ENCODE measurements at regions of chr12 and their contacts with region 1.

Region 1: DNA sequence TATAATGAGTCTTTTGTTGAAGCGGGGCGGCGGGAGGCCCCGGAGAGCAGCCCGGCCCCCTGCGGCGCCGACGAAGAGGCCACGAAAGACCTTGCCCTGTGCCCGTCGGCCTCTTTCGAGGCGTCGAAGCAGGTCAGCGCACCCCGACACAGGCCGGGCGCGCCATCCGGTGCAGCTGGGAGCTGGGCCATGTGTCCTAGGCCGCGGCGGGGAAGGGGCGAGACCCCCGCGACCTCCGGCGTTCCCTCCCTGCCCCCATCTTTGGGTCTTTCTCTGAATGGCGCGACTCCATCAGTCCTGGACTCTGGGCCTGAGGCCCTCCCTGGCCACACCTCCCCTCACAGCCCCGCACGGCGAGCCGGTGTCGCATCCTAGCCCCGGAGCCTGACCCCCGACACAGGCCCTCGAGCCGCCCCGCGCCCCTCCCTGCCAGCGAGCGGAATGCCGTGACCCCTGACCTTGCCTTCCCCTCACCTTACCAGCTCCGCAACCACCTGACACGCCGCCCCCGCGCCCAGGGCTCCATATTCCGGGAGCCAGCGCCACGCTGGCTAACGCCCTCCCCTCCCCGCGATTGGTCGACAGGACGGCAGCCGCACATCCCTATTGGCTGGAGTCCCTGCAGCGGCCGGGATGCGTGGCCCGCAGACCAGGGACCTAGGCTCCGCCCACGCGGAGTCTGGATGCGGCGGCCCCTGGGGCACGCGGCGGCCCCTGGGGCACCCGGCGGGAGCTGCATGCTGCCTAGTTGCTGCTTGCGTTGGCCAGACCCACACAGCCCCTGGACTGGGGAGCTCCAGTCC is at the start of gene SLC11A2:
- DNase-seq: peak; percentile 94
- ATAC-seq: peak; percentile 91
- H3K4me3 ChIP-seq: peak within 1 kb of the TSS; percentile 59 to 79 (median 79)
- H3K27ac ChIP-seq: peak within 1 kb of the TSS; percentile 99
- H3K4me1 ChIP-seq: peaks cover 73% of the 10 kb centered on the region
- H3K27me3 ChIP-seq: no peaks in the 10 kb centered on the region; a peak in 1 of 5 replicates
- CTCF ChIP-seq: peak; percentile 8
- EP300 ChIP-seq: peak in 1 of 2 experiments; percentile 77; a peak in 1 of 4 replicates
- POLR2A ChIP-seq: peak; percentile 73 to 83
- RAD21 ChIP-seq: peak; percentile 42
- total RNA-seq, gene SLC11A2: 46.0 and 71.7 TPM in 2 replicates

Region 2: GRCh38 chr12:50763639-50764285 is 262.3 kb before region 1 on chr12 and contains the start of gene ATF1:
- CTCF ChIA-PET with region 1: no interaction called
- POLR2A ChIA-PET with region 1: interaction called, 30 read pairs
- in situ Hi-C with region 1: no loop called
- intact Hi-C with region 1: loop called (anchors 2 kb)
- DNase-seq: peak; percentile 84
- ATAC-seq: peak; percentile 86
- H3K4me3 ChIP-seq: peak within 1 kb of the TSS; percentile 83 to 95 (median 90)
- H3K27ac ChIP-seq: peak within 1 kb of the TSS; percentile 98
- H3K4me1 ChIP-seq: peaks cover 47% of the 10 kb centered on the region
- H3K27me3 ChIP-seq: no peaks in the 10 kb centered on the region; a peak in 1 of 5 replicates
- CTCF ChIP-seq: peak; percentile 34
- EP300 ChIP-seq: 0 out of 4 replicates have a peak, but pooled peaks of 1 of the 2 experiments have one; percentile 33
- POLR2A ChIP-seq: peak; percentile 91 to 97
- RAD21 ChIP-seq: peak; percentile 51
- total RNA-seq, gene ATF1: 29.3 and 48.0 TPM in 2 replicates

Region 3: DNA sequence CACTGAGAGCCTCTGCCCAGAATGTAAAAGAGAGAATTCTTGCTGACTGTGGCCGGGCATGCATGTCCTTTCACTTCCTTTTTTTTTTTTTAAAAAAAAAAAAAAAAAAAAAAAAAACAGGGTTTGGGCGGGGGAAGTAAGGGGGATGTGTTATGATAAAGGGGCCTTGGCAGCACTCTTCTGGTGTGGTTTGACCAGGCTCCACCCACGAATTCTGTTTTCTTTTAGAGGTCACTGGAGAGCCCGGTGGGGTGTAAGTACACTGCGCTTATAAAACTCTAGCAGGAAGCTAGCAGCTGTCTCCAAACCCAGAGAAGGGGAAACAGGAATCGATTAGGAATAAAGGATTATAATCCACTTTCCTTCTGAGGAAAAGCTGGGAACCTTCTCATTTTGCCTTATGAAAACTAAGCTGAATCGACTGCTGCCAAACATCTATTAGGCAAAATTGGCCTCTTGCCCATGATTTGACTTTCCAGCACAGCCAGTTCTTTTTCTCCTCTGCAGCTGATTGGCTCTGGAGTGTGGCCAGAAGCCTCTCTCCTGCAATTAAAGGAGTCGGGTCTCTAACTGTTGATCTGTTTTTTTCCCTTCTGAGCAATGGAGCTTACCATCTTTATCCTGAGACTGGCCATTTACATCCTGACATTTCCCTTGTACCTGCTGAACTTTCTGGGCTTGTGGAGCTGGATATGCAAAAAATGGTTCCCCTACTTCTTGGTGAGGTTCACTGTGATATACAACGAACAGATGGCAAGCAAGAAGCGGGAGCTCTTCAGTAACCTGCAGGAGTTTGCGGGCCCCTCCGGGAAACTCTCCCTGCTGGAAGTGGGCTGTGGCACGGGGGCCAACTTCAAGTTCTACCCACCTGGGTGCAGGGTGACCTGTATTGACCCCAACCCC is 101.3 kb before region 1 on chr12:
- CTCF ChIA-PET with region 1: no interaction called
- POLR2A ChIA-PET with region 1: interaction called, 19 read pairs
- in situ Hi-C with region 1: no loop called
- intact Hi-C with region 1: no loop called
- DNase-seq: peak; percentile 89
- ATAC-seq: peak; percentile 87
- H3K4me3 ChIP-seq: peak overlapping the region; percentile 70 to 85 (median 85)
- H3K27ac ChIP-seq: peak overlapping the region; percentile 82
- H3K4me1 ChIP-seq: peaks cover 48% of the 10 kb centered on the region
- H3K27me3 ChIP-seq: peaks cover 0 to 3% of the 10 kb centered on the region in 2 experiments; a peak in 1 of 5 replicates
- CTCF ChIP-seq: no peak
- EP300 ChIP-seq: 0 out of 4 replicates have a peak, but pooled peaks of 1 of the 2 experiments have one; percentile 8
- POLR2A ChIP-seq: peak; percentile 17 to 37; a peak in 2 of 4 replicates
- RAD21 ChIP-seq: no peak

Region 4: GRCh38 chr12:50979369-50980052 is 46.5 kb before region 1 on chr12:
- CTCF ChIA-PET with region 1: no interaction called
- POLR2A ChIA-PET with region 1: interaction called, 4 read pairs
- in situ Hi-C with region 1: no loop called
- intact Hi-C with region 1: loop called (anchors 2 kb)
- DNase-seq: no peak
- ATAC-seq: no peak
- H3K4me3 ChIP-seq: no peak overlapping the region
- H3K27ac ChIP-seq: peak overlapping the region; percentile 68
- H3K4me1 ChIP-seq: peaks cover 34% of the 10 kb centered on the region
- H3K27me3 ChIP-seq: no peaks in the 10 kb centered on the region
- CTCF ChIP-seq: no peak
- EP300 ChIP-seq: no peak
- POLR2A ChIP-seq: no peak
- RAD21 ChIP-seq: no peak

Region 5: DNA sequence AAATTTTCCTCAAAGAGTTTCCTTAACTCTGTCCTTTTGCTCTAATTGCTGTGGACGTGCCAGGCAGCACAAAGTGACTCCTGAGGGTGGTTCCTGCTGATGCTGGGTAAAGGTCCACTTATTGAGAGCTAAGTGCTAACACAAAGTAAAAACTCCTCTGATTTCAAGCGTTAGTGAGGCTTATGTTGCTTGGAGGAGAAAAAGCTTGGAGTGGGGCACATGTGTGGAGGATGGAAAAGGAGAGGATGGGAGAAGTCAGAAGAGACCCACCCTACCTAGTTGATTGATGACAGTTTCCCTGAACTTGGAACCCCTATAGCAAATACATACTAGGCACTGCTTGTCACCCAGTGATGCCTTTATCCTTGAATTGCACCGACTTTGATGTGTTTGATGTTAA is 10.2 kb after region 1 on chr12:
- CTCF ChIA-PET with region 1: no interaction called
- POLR2A ChIA-PET with region 1: interaction called, 15 read pairs
- in situ Hi-C with region 1: no loop called
- intact Hi-C with region 1: no loop called
- DNase-seq: peak; percentile 28
- ATAC-seq: peak; percentile 84
- H3K4me3 ChIP-seq: peak overlapping the region in 2 of 3 experiments; percentile 21 to 30; a peak in 2 of 6 replicates
- H3K27ac ChIP-seq: peak overlapping the region; percentile 40
- H3K4me1 ChIP-seq: peaks cover 61% of the 10 kb centered on the region
- H3K27me3 ChIP-seq: no peaks in the 10 kb centered on the region
- CTCF ChIP-seq: no peak
- EP300 ChIP-seq: no peak; a peak in 1 of 4 replicates
- POLR2A ChIP-seq: no peak
- RAD21 ChIP-seq: no peak

Region 6: DNA sequence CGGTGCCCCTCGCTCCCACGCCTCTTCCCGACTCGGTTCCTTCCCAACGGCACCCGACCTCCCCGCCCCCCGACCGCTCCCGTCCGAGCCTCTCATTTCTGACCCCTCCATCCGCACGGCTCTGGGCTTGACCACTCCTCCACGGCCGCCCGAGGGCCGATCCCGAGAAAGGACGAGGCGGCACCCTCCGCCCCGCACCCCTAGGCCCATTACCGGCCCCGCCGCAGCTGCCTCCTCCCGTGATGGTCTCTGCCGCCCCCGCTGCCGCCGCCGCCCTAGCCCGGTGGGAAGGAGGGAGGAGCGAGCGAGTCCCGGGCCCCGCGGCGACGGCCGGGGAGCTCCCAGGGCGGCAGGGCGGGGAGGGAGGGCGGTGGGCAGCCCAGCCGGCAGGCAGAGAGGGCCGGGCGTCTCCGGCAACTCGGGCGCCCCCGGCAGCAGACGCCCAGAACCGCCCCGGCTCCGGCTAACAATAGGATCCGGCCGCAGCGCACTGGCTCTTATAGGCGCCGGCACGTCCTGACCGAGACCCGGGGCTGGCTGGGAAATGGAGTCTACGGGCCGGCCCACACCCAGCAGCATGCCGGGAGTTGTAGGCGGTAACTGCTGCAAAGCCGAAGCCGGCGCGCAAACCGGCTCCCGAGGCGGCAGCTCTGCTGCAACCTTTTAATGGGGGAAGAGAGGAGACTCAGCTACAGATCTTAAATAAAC is 57.2 kb after region 1 on chr12 and contains the start of gene CSRNP2:
- CTCF ChIA-PET with region 1: no interaction called
- POLR2A ChIA-PET with region 1: interaction called, 24 read pairs
- in situ Hi-C with region 1: no loop called
- intact Hi-C with region 1: no loop called
- DNase-seq: peak; percentile 87
- ATAC-seq: peak; percentile 99
- H3K4me3 ChIP-seq: peak within 1 kb of the TSS; percentile 83 to 88 (median 88)
- H3K27ac ChIP-seq: peak within 1 kb of the TSS; percentile 70
- H3K4me1 ChIP-seq: peaks cover 15% of the 10 kb centered on the region
- H3K27me3 ChIP-seq: no peaks in the 10 kb centered on the region; a peak in 1 of 5 replicates
- CTCF ChIP-seq: peak; percentile 33
- EP300 ChIP-seq: 0 out of 4 replicates have a peak, but pooled peaks of 1 of the 2 experiments have one; percentile 38
- POLR2A ChIP-seq: peak; percentile 98 to 99
- RAD21 ChIP-seq: peak; percentile 79
- total RNA-seq, gene CSRNP2: 4.8 and 5.4 TPM in 2 replicates